ENCODE measurements at regions of chr3 and their contacts with region 1.

Region 1: GRCh38 chr3:13452490-13453335 is 27.4 kb upstream of the HDAC11 start:
- DNase-seq: peak in 1 of 2 donors; percentile 26
- H3K4me3 ChIP-seq: peak overlapping the region; percentile 53 to 59
- H3K27ac ChIP-seq: peak overlapping the region in 1 of 2 donors; percentile 74
- H3K4me1 ChIP-seq: peaks cover 0 to 14% (median 7%) of the 10 kb centered on the region in 4 donors
- H3K27me3 ChIP-seq: no peaks in the 10 kb centered on the region
- CTCF ChIP-seq: peak; percentile 58 to 70

Region 2: DNA sequence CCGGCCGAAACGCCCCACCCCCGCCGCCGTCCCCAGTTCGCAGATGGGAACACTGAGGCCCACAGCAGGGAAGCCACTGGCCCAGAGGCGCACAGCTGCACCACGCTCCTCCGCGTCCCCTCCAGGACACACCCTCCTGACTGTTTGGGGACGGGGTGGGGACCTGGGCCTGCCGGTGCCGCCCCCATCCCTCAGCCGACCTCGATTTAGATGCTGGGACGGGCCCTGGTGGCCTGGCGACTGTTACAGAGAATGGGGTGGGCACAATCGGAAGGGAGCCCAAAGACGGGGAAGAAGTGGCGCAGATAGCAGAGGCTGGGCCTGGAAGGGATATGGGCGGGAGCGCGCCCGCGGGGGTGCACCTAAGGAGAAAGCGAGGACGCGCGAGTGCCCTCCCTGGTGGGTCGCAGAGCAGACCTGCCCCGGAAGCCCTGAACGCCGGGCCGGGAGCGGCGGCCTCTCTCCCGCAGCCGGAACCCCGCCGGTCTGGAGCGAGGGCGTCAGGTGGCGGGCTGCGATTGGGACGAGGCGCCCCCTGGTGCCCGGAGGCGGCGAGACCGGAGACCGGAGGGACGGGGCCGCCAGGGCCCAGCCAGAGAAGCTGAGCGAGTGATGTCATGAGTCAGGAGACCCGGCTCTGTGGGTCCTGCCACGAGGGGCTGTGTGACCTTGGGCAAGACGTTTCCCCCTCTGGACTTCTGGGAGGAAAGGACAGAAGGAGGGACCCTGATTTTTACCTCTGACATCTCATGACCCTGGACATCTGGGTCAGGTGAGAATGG is 457.9 kb before region 1 on chr3:
- intact Hi-C with region 1: loop called (anchors 5 kb)
- DNase-seq: peak; percentile 86 to 94
- H3K4me3 ChIP-seq: peak overlapping the region; percentile 62 to 76
- H3K27ac ChIP-seq: peak overlapping the region; percentile 90 to 95
- H3K4me1 ChIP-seq: peaks cover 0 to 25% (median 17%) of the 10 kb centered on the region in 4 donors
- H3K27me3 ChIP-seq: no peaks in the 10 kb centered on the region
- CTCF ChIP-seq: peak; percentile 93 to 96

Region 3: GRCh38 chr3:13091898-13092611 is 360.7 kb before region 1 on chr3:
- intact Hi-C with region 1: loop called (anchors 2 kb)
- DNase-seq: peak; percentile 84 to 89
- H3K4me3 ChIP-seq: no peak overlapping the region
- H3K27ac ChIP-seq: no peak overlapping the region
- H3K4me1 ChIP-seq: peaks cover 0 to 18% (median 13%) of the 10 kb centered on the region in 4 donors
- H3K27me3 ChIP-seq: no peaks in the 10 kb centered on the region
- CTCF ChIP-seq: peak; percentile 96 to 98

Region 4: DNA sequence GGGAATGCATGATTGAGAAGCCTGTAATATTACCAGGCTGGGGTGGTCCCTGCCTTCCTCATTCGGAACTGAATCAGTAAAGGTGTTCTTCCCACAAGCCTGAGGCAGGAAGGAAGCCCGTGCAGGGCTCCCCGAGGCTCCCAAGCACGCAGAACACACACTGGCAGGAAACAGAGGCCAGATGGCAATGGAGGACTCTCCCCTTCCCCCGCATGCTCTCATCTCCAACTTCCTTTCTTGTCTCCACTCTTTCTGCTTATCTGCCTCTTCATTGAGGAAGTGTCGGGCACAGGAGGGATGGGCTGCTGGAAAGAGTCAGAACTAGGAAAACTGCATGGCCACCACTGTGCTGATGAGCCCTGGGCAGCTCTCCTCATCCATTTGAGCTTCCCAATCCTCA is 156.1 kb before region 1 on chr3:
- intact Hi-C with region 1: loop called (anchors 10 kb)
- DNase-seq: peak in 1 of 2 donors; percentile 48
- H3K4me3 ChIP-seq: no peak overlapping the region
- H3K27ac ChIP-seq: no peak overlapping the region
- H3K4me1 ChIP-seq: peaks cover 0 to 8% (median 4%) of the 10 kb centered on the region in 4 donors
- H3K27me3 ChIP-seq: peaks cover 0 to 18% of the 10 kb centered on the region in 2 donors
- CTCF ChIP-seq: no peak

Region 5: DNA sequence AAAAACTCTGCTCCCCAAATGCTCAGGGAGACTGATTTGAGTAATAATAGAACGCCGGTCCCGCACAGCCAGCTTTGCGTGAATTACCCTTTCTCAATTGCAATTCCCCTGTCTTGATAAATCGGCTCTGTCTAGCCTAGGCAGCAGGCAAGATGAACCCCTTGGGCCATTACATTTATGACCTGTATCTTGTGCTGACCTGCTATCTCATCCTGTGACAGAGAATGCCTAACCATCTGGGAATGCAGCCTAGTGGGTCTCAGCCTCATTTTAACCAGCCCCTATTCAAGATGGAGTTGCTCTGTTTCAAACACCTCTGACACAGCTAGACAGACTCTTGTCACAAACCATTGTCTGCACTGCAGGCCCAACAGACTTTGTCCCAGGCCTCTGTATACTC is 18.8 kb before region 1 on chr3:
- intact Hi-C with region 1: no loop called
- DNase-seq: no peak
- H3K4me3 ChIP-seq: no peak overlapping the region
- H3K27ac ChIP-seq: no peak overlapping the region
- H3K4me1 ChIP-seq: no peaks in the 10 kb centered on the region
- H3K27me3 ChIP-seq: peaks cover 0 to 3% of the 10 kb centered on the region in 2 donors
- CTCF ChIP-seq: no peak